ENCODE measurements at regions of chr16 and their contacts with region 1.

Region 1: DNA sequence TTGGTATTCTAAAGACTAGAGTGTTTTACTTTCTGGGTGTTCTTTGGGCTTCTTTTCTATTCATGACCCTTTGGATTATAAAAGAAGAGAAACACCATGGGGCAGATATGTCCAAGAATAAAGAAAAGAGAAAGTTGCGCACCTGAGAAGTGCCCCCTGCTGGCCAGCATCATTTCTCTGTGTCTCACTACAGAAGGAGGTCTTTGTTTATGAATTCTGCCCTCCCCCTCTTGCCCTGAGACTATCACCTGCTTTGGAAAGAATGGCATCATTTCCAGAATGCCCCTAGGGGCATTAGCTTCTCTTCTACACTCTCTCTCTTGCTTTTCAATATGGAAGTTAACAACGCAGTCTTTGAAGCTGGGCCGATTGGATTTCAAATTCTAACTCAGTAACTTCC is 45.0 kb downstream of the CDH13 start:
- DNase-seq: peak in 1 of 5 donors; percentile 19
- H3K4me3 ChIP-seq: no peak overlapping the region
- H3K4me3 Mint-ChIP-seq: no peak overlapping the region
- H3K27ac ChIP-seq: no peak overlapping the region
- H3K27ac Mint-ChIP-seq: no peak overlapping the region
- H3K4me1 ChIP-seq: no peaks in the 10 kb centered on the region
- H3K4me1 Mint-ChIP-seq: peaks cover 0 to 2% (median 0%) of the 10 kb centered on the region in 4 donors
- H3K27me3 ChIP-seq: no peaks in the 10 kb centered on the region
- H3K27me3 Mint-ChIP-seq: peaks cover 0 to 1% of the 10 kb centered on the region in 2 donors

Region 2: GRCh38 chr16:82630688-82631087 is 41.1 kb before region 1 on chr16:
- CTCF ChIA-PET with region 1: interaction called, 31 read pairs
- POLR2A ChIA-PET with region 1: interaction called, 5 read pairs
- intact Hi-C with region 1: loop called (anchors 2 kb)
- DNase-seq: no peak
- H3K4me3 ChIP-seq: no peak overlapping the region
- H3K4me3 Mint-ChIP-seq: no peak overlapping the region
- H3K27ac ChIP-seq: no peak overlapping the region
- H3K27ac Mint-ChIP-seq: no peak overlapping the region
- H3K4me1 ChIP-seq: no peaks in the 10 kb centered on the region
- H3K4me1 Mint-ChIP-seq: peaks cover 0 to 7% (median 1%) of the 10 kb centered on the region in 4 donors
- H3K27me3 ChIP-seq: peaks cover 11% of the 10 kb centered on the region
- H3K27me3 Mint-ChIP-seq: peaks cover 29 to 36% of the 10 kb centered on the region in 2 donors

Region 3: DNA sequence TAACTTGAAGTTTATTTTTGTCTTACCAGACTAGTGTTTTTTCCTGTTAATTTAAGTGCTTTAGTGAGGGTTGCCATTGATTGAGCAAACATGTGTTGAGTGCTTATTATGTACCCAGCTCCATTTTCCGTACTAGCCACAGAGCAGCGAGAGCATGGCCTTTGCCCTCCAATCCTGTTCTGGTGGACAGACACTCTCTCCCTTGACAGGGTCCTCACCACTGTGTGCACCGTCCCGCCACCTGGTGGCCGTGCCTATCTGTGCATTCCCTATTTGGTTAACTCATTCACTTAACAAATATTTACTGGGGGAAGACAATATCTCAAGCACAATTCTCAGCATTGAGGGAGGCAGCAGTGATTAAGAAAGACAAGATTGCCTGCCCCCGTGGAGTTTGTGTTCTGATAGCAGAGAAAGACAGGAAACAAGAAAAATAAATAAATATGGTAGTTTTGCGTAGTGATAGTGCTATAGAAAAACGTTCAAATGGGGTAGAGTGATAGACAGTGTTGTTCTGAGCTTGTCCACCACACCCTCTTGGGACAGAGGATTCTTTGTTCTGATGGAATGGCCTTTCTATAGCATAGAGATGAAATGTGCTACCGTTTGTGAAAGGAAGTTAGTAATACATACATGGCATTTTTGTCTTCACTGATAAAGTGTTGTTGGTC is 31.9 kb before region 1 on chr16:
- CTCF ChIA-PET with region 1: interaction called, 129 read pairs
- POLR2A ChIA-PET with region 1: interaction called, 4 read pairs
- intact Hi-C with region 1: loop called (anchors 1 kb)
- DNase-seq: peak in 3 of 5 donors; percentile 19 to 35 (median 29)
- H3K4me3 ChIP-seq: no peak overlapping the region
- H3K4me3 Mint-ChIP-seq: no peak overlapping the region
- H3K27ac ChIP-seq: no peak overlapping the region
- H3K27ac Mint-ChIP-seq: peak overlapping the region in 1 of 7 donors; percentile 5
- H3K4me1 ChIP-seq: peaks cover 5% of the 10 kb centered on the region
- H3K4me1 Mint-ChIP-seq: peaks cover 4 to 7% (median 5%) of the 10 kb centered on the region in 4 donors
- H3K27me3 ChIP-seq: no peaks in the 10 kb centered on the region
- H3K27me3 Mint-ChIP-seq: no peaks in the 10 kb centered on the region

Region 4: DNA sequence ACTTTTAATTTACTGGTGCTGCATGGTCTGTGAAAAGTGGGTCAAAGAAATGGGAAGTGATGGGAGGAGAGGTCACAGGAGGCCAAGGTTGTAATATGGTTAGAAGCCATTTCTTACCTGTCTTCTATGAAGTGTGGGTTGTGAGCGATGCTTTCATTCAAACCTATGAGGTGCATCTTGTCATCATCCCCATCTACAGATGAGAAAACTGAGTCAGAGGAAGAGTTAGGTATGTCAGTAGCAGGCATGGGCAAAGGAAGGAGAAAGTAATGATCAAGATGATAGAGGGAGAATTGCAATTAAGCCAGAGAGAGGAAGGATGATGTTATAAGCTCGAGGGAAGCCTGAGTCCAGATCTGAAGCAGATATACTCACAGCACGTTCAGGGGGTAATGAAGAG is 25.2 kb before region 1 on chr16:
- CTCF ChIA-PET with region 1: interaction called, 129 read pairs
- POLR2A ChIA-PET with region 1: interaction called, 5 read pairs
- intact Hi-C with region 1: loop called (anchors 1 kb)
- DNase-seq: no peak
- H3K4me3 ChIP-seq: no peak overlapping the region
- H3K4me3 Mint-ChIP-seq: no peak overlapping the region
- H3K27ac ChIP-seq: no peak overlapping the region
- H3K27ac Mint-ChIP-seq: peak overlapping the region in 2 of 7 donors; percentile 13 to 43
- H3K4me1 ChIP-seq: peaks cover 31% of the 10 kb centered on the region
- H3K4me1 Mint-ChIP-seq: peaks cover 23 to 46% (median 30%) of the 10 kb centered on the region in 4 donors
- H3K27me3 ChIP-seq: no peaks in the 10 kb centered on the region
- H3K27me3 Mint-ChIP-seq: no peaks in the 10 kb centered on the region

Measured in CD4-positive, alpha-beta memory T cell (primary cell).